ENCODE measurements at regions of chr4 and their contacts with region 1.

Region 1: DNA sequence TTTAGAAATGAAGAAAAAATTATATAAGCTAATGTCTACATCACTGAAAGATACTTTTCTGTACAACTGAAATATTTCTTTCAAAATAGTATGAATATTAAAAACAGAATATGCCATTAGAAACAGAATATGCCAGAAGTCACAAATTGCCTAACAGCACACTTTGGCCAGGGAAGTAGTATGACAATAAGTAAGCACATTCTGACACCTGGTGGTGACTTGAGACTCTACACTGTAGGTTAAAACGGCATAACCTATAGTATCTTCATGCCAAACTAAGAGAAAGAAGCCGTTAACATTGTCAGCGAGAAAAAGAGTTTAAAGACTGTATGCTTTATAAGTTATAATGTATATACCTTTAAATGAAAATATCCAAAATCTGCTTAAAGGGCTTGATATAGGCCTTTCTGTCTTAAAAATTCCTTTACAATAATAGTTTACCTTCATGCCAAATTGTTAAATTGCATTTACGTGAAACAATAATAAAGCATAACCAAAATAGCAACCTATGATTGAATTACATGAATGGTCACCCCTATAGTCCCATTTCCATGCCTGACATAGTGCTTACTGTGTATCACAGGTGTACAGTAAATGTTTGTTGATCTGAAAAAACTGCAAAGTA is 32.8 kb downstream of the FAM13A start:
- DNase-seq: peak; percentile 17 to 69 (median 54)
- H3K4me3 ChIP-seq: no peak overlapping the region
- H3K4me3 Mint-ChIP-seq: no peak overlapping the region
- H3K27ac ChIP-seq: no peak overlapping the region
- H3K27ac Mint-ChIP-seq: no peak overlapping the region
- H3K4me1 ChIP-seq: no peaks in the 10 kb centered on the region
- H3K4me1 Mint-ChIP-seq: no peaks in the 10 kb centered on the region
- H3K27me3 ChIP-seq: no peaks in the 10 kb centered on the region
- H3K27me3 Mint-ChIP-seq: peaks cover 0 to 3% of the 10 kb centered on the region in 2 donors

Region 2: GRCh38 chr4:88523325-88524129 is 500.6 kb before region 1 on chr4 and contains the start of gene PYURF:
- CTCF ChIA-PET with region 1: interaction called, 32 read pairs
- POLR2A ChIA-PET with region 1: no interaction called
- DNase-seq: peak; percentile 66 to 80 (median 69)
- H3K4me3 ChIP-seq: peak within 1 kb of the TSS; percentile 73
- H3K4me3 Mint-ChIP-seq: peak within 1 kb of the TSS; percentile 91 to 99 (median 94)
- H3K27ac ChIP-seq: peak within 1 kb of the TSS; percentile 77
- H3K27ac Mint-ChIP-seq: peak within 1 kb of the TSS; percentile 88 to 98 (median 93)
- H3K4me1 ChIP-seq: peaks cover 23% of the 10 kb centered on the region
- H3K4me1 Mint-ChIP-seq: peaks cover 32 to 48% (median 48%) of the 10 kb centered on the region in 3 donors
- H3K27me3 ChIP-seq: no peaks in the 10 kb centered on the region
- H3K27me3 Mint-ChIP-seq: no peaks in the 10 kb centered on the region
- total RNA-seq, gene PYURF: 68.4 to 70.0 TPM

Region 3: DNA sequence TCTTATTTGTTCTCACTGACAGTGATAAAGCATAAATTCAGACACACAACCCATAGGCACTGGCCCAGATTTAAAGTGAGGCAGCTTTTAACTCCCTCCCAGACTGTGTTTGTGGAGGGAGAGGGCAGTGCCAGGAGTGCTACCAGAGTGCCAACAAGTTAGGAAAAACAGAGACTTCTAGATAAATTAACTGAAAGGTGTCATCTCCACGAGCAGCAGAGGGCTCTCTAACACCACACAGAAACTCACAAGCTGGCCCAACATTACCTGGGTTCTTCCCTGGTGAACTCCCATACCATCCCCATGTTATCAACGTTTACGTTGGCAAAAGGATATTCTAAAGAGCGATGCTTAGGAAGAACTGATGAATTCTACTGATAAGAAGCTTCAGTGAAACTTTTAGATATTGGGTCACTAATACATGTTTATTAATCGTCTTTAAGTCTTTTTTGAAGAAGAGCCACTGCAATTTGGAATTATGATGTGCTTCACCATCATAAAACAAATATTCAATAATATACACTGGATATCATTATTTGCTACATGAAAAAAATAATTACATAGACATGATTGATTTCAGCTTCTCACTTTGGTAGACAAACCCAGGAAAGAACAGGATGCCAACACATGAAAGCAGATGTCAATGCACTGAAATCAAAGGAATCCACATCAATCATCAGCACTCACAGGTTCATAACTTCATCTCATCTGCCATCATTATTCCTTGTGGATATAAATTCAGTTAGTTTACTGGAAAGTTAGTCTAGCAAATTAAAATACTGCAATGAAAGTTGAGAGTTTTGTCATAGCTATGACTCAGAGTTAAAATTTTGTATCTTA is 205.3 kb before region 1 on chr4:
- CTCF ChIA-PET with region 1: interaction called, 114 read pairs
- POLR2A ChIA-PET with region 1: no interaction called
- DNase-seq: peak; percentile 3 to 67 (median 28)
- H3K4me3 ChIP-seq: peak overlapping the region; percentile 2
- H3K4me3 Mint-ChIP-seq: no peak overlapping the region
- H3K27ac ChIP-seq: no peak overlapping the region
- H3K27ac Mint-ChIP-seq: peak overlapping the region; percentile 17 to 77 (median 36)
- H3K4me1 ChIP-seq: peaks cover 4% of the 10 kb centered on the region
- H3K4me1 Mint-ChIP-seq: peaks cover 27 to 50% (median 44%) of the 10 kb centered on the region in 3 donors
- H3K27me3 ChIP-seq: no peaks in the 10 kb centered on the region
- H3K27me3 Mint-ChIP-seq: peaks cover 0 to 3% of the 10 kb centered on the region in 2 donors